ENCODE measurements at regions of chr17 and their contacts with region 1.

Region 1: GRCh38 chr17:8173056-8173870 is 2.9 kb downstream of the TMEM107 start:
- DNase-seq: peak; percentile 98
- ATAC-seq: peak; percentile 70
- H3K4me3 ChIP-seq: peak overlapping the region; percentile 60 to 78 (median 73)
- H3K27ac ChIP-seq: peak overlapping the region; percentile 97
- H3K4me1 ChIP-seq: peaks cover 46% of the 10 kb centered on the region
- H3K27me3 ChIP-seq: no peaks in the 10 kb centered on the region; a peak in 1 of 5 replicates
- CTCF ChIP-seq: no peak
- EP300 ChIP-seq: peak; percentile 12 to 83; a peak in 3 of 4 replicates
- POLR2A ChIP-seq: peak; percentile 100
- RAD21 ChIP-seq: peak; percentile 70

Region 2: DNA sequence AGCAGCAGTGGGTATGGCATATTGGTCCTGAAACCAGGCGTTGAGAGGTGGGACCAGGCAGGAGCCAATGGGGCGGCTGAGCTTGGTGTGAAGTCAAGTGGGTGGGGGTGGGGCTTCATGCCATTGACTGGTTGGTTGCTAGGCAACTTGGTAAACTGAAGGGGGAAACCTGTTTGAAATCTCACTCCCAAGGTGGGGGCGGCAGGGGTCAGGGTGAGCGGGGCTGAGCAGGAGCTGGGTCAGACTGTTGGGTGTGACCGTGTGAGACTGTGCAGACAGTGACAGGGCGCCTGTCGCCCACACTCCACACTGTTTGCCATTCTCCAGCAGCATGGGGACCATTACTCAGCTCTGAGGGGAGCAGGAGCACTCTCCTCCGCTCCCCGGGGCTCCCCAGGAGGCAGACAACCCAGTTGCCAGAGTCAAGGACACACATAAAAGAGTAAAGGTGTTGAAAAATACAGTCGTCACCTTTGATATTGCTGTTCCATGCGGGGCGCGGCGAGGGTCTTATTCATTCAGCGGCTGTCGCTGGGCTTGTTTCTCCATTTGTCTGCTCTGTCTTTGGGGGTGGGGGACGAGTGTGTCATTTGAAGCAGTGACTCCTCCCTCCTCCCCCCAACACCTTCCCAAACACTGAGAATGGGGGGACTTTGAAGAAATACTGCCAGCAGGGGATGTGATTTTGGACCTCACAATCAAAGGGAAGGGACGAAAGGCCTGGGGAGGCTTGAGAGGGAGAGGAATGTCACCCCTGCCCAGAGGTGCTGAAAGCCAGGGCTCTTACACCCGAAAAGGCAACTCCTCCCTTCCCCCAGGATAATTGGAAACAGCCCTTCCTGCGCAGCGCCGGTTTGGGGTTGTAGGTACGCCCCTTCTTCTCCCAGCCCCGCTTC is 469.4 kb before region 1 on chr17:
- CTCF ChIA-PET with region 1: no interaction called
- POLR2A ChIA-PET with region 1: no interaction called
- in situ Hi-C with region 1: no loop called
- intact Hi-C with region 1: no loop called
- DNase-seq: peak; percentile 18
- ATAC-seq: peak; percentile 26; the same call in 2 of the 3 replicates
- H3K4me3 ChIP-seq: no peak overlapping the region
- H3K27ac ChIP-seq: no peak overlapping the region
- H3K4me1 ChIP-seq: peaks cover 6% of the 10 kb centered on the region; the same call in 1 of the 2 replicates
- H3K27me3 ChIP-seq: peaks cover 8 to 41% of the 10 kb centered on the region in 2 experiments
- CTCF ChIP-seq: no peak
- EP300 ChIP-seq: no peak
- POLR2A ChIP-seq: no peak
- RAD21 ChIP-seq: no peak

Region 3: GRCh38 chr17:8118769-8119580 is 54.3 kb before region 1 on chr17:
- CTCF ChIA-PET with region 1: no interaction called
- POLR2A ChIA-PET with region 1: interaction called, 35 read pairs
- in situ Hi-C with region 1: no loop called
- intact Hi-C with region 1: no loop called
- DNase-seq: peak; percentile 77
- ATAC-seq: peak; percentile 75
- H3K4me3 ChIP-seq: peak overlapping the region; percentile 68 to 95 (median 94)
- H3K27ac ChIP-seq: peak overlapping the region; percentile 10
- H3K4me1 ChIP-seq: peaks cover 52% of the 10 kb centered on the region
- H3K27me3 ChIP-seq: peaks cover 6 to 58% of the 10 kb centered on the region in 2 experiments
- CTCF ChIP-seq: peak; percentile 81
- EP300 ChIP-seq: no peak
- POLR2A ChIP-seq: no peak
- RAD21 ChIP-seq: peak; percentile 53; the same call in 1 of the 2 replicates

Region 4: DNA sequence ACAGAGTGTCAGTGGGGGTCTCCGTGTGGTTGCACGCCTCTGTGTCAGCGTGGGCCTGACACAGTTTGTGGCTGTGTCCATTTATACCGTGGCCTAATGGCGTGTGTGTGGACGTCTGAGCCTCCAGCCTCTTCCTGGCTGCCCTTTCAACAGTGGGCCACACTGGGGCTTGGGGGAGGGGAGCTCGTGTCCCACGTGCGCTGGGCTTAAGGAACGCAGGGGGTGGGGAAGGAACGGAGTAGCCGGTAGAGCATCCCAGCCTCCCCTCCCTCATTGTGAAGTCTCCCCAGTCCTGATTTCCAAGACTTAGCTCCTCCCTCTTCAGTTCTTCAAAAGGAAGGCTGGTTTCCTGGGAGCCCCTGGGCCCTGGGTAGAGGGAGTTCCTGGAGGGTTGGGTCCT is 39.9 kb before region 1 on chr17:
- CTCF ChIA-PET with region 1: no interaction called
- POLR2A ChIA-PET with region 1: interaction called, 15 read pairs
- in situ Hi-C with region 1: no loop called
- intact Hi-C with region 1: loop called (anchors 2 kb)
- DNase-seq: no peak
- ATAC-seq: peak; percentile 39
- H3K4me3 ChIP-seq: peak overlapping the region; percentile 3 to 46 (median 6); a peak in 4 of 6 replicates
- H3K27ac ChIP-seq: no peak overlapping the region
- H3K4me1 ChIP-seq: peaks cover 37% of the 10 kb centered on the region
- H3K27me3 ChIP-seq: peaks cover 0 to 11% of the 10 kb centered on the region in 2 experiments; a peak in 1 of 5 replicates
- CTCF ChIP-seq: no peak
- EP300 ChIP-seq: no peak
- POLR2A ChIP-seq: no peak
- RAD21 ChIP-seq: no peak

Region 5: DNA sequence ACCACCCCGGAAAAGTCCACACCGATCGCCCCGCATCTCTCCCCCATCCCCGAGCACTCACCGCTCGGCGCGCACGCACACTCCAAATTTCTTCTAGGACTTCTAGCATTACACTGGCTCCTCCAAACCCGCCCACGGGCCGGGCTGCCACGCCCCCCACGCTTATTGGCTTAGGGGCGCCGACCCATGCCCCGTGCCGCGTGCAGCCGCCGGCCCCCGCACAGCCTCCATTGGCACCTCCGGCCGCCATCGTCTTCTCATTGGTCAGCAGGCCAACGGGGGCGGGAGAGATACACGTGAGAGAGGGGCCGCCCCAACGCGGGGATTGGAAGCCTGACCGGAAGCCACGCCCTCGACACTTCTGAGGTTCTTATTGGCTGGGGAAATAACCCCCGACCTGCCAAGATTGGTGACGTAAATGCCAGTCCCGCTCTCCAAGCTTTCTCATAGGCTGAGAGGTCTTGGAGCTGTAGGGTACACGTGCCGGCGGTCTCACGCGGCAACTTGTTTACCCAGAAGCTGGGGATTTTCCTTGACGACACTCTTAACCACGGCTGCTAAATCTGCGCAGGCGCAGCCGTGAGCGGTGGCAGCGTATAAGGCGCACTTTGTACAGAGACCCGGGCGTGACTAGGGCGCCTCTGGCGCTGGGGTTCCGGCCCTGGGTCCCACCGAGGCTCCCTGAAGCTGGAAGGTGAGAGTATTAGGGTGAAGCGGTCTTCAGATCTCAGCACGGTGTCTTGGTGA is 16.8 kb before region 1 on chr17:
- CTCF ChIA-PET with region 1: no interaction called
- POLR2A ChIA-PET with region 1: interaction called, 42 read pairs
- in situ Hi-C with region 1: no loop called
- intact Hi-C with region 1: no loop called
- DNase-seq: peak; percentile 98
- ATAC-seq: peak; percentile 62
- H3K4me3 ChIP-seq: peak overlapping the region; percentile 58 to 70 (median 63); a peak in 5 of 6 replicates
- H3K27ac ChIP-seq: peak overlapping the region; percentile 86
- H3K4me1 ChIP-seq: peaks cover 71% of the 10 kb centered on the region
- H3K27me3 ChIP-seq: no peaks in the 10 kb centered on the region
- CTCF ChIP-seq: peak; percentile 25
- EP300 ChIP-seq: peak in 1 of 2 experiments; percentile 66; a peak in 2 of 4 replicates
- POLR2A ChIP-seq: peak; percentile 63 to 70
- RAD21 ChIP-seq: no peak

Region 6: DNA sequence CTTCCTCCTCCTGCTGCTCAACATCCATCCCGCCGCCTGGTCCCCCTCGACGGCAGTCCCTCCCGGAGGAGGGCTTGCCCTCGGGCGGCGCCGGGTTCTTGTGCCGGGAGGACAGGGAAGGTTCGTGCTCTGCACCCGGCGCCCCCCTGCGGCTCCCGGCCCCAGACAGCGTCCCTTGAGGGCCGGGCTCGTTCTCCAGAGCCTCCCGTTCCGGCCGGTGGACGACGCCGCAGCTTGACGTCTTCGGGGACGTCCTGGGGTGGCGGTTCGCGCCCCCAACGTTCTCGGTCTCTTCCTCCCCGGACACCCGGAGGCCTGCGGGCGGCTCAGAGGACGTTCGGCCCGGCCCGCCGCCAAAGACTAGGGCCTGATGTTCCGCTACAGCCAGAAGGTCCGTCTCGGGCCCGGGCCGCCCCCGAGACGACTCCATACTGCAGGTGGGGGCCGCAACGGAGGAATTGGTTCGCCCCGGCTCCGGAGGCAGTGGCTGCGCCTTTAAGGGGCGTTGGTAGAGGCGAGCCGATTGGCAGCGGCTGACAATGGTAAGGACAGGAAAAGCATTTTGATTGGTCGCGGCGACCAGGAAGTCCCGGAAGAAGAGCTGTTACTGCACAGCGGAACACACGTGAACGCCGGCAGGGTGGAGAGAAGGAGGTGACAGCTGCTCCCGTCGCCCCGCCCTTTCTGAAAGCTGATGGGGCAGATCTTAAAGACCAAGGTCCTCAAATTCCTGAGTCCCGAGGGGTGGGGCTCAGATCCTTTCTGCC is 16.6 kb after region 1 on chr17 and contains the start of gene BORCS6:
- CTCF ChIA-PET with region 1: no interaction called
- POLR2A ChIA-PET with region 1: interaction called, 160 read pairs
- in situ Hi-C with region 1: no loop called
- intact Hi-C with region 1: no loop called
- DNase-seq: peak; percentile 95
- ATAC-seq: peak; percentile 67
- H3K4me3 ChIP-seq: peak within 1 kb of the TSS; percentile 74 to 92 (median 77)
- H3K27ac ChIP-seq: peak within 1 kb of the TSS; percentile 64
- H3K4me1 ChIP-seq: peaks cover 47% of the 10 kb centered on the region
- H3K27me3 ChIP-seq: no peaks in the 10 kb centered on the region; a peak in 1 of 5 replicates
- CTCF ChIP-seq: peak; percentile 47
- EP300 ChIP-seq: peak in 1 of 2 experiments; percentile 6; a peak in 1 of 4 replicates
- POLR2A ChIP-seq: peak; percentile 30 to 46; a peak in 2 of 4 replicates
- RAD21 ChIP-seq: peak; percentile 18; the same call in 1 of the 2 replicates
- total RNA-seq, gene BORCS6: 5.1 and 5.3 TPM in 2 replicates

Region 7: GRCh38 chr17:8222630-8223356 is 49.5 kb after region 1 on chr17:
- CTCF ChIA-PET with region 1: no interaction called
- POLR2A ChIA-PET with region 1: interaction called, 41 read pairs
- in situ Hi-C with region 1: no loop called
- intact Hi-C with region 1: no loop called
- DNase-seq: peak; percentile 88
- ATAC-seq: peak; percentile 64
- H3K4me3 ChIP-seq: peak overlapping the region; percentile 69 to 85 (median 70)
- H3K27ac ChIP-seq: peak overlapping the region; percentile 91
- H3K4me1 ChIP-seq: peaks cover 33% of the 10 kb centered on the region
- H3K27me3 ChIP-seq: no peaks in the 10 kb centered on the region; a peak in 1 of 5 replicates
- CTCF ChIP-seq: no peak
- EP300 ChIP-seq: no peak
- POLR2A ChIP-seq: peak; percentile 53 to 78; a peak in 3 of 4 replicates
- RAD21 ChIP-seq: peak; percentile 31

Region 8: DNA sequence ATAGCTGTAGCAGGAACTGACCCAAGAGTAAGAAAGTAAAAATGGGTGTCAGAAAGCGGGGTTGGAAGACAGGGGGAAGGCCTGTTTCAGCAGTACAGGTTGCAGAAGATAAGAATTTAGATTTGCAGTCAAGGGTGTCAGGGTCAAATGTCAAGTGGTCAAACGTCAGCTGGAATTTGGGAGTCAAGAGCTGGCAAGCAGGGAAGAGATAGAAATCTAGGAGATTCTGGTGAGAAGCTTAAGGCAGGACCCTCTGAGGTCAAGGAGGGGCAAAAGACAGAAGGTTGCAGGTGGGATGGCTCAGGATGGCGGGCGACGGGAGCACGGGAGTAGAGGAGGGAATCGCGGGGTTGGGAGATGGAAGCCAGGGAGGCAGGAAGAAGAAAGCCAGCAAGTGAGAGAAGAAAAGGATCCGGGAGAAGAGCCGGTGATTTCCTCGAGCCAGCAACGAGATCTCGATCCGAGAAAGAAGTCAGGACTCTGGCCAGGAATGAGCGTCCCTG is 121.6 kb after region 1 on chr17:
- CTCF ChIA-PET with region 1: no interaction called
- POLR2A ChIA-PET with region 1: interaction called, 25 read pairs
- in situ Hi-C with region 1: no loop called
- intact Hi-C with region 1: no loop called
- DNase-seq: no peak
- ATAC-seq: peak; percentile 18
- H3K4me3 ChIP-seq: peak overlapping the region; percentile 60 to 79 (median 72)
- H3K27ac ChIP-seq: peak overlapping the region; percentile 88
- H3K4me1 ChIP-seq: peaks cover 45% of the 10 kb centered on the region
- H3K27me3 ChIP-seq: no peaks in the 10 kb centered on the region
- CTCF ChIP-seq: no peak
- EP300 ChIP-seq: no peak
- POLR2A ChIP-seq: peak in 1 of 2 experiments; percentile 67; a peak in 2 of 4 replicates
- RAD21 ChIP-seq: no peak

Measured in HepG2 (cell line).